ENCODE measurements at regions of chr3 and their contacts with region 1.

Region 1: DNA sequence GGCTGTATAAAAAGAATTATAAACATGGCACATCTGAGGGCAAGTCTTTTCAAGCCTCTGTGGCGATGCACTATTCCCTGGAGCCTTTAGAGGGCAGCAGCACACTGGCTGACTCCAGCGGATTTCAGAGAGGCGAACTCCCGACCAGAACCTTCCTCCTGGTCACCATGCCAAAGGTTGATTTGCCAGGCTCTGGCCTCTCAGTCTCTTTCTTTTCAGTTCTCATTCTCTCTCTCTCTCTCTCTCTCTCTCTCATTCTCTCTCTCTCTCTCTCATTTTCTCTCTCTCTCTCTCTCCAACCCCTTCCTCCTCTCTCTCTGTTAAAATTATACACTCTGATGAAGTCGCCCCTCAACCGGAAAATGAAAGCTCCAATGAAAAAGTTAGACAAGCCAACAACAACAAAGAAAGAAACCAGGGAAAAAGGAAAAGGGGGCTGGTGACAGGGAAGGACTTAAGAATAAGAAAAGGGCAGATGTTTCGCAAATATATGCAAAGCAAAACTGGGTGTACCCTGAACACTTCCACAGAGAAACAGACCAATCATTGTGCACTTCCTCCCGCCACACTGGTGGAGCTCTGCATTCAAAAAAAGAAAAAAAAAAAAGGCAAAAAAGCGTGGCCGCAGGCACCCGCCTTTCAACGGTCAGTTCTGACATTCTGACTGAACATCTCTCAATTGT is 90.2 kb downstream of the TIGIT start:
- DNase-seq: peak; percentile 39 to 50 (median 47)
- H3K4me3 ChIP-seq: peak overlapping the region in 1 of 2 donors; percentile 33
- H3K4me3 Mint-ChIP-seq: peak overlapping the region in 7 of 8 donors; percentile 74 to 89 (median 85)
- H3K27ac ChIP-seq: no peak overlapping the region
- H3K27ac Mint-ChIP-seq: peak overlapping the region in 5 of 7 donors; percentile 38 to 76 (median 61)
- H3K4me1 ChIP-seq: peaks cover 16% of the 10 kb centered on the region
- H3K4me1 Mint-ChIP-seq: peaks cover 8 to 15% (median 12%) of the 10 kb centered on the region in 4 donors
- H3K27me3 ChIP-seq: no peaks in the 10 kb centered on the region
- H3K27me3 Mint-ChIP-seq: no peaks in the 10 kb centered on the region

Region 2: GRCh38 chr3:112751564-112752512 is 1632.2 kb before region 1 on chr3:
- CTCF ChIA-PET with region 1: no interaction called
- POLR2A ChIA-PET with region 1: no interaction called
- intact Hi-C with region 1: no loop called
- DNase-seq: no peak
- H3K4me3 ChIP-seq: no peak overlapping the region
- H3K4me3 Mint-ChIP-seq: no peak overlapping the region
- H3K27ac ChIP-seq: no peak overlapping the region
- H3K27ac Mint-ChIP-seq: no peak overlapping the region
- H3K4me1 ChIP-seq: peaks cover 21% of the 10 kb centered on the region
- H3K4me1 Mint-ChIP-seq: peaks cover 6 to 17% (median 13%) of the 10 kb centered on the region in 4 donors
- H3K27me3 ChIP-seq: no peaks in the 10 kb centered on the region
- H3K27me3 Mint-ChIP-seq: no peaks in the 10 kb centered on the region

Region 3: GRCh38 chr3:114405202-114405990 is 21.4 kb after region 1 on chr3:
- CTCF ChIA-PET with region 1: interaction called, 27 read pairs
- POLR2A ChIA-PET with region 1: no interaction called
- intact Hi-C with region 1: no loop called
- DNase-seq: no peak
- H3K4me3 ChIP-seq: no peak overlapping the region
- H3K4me3 Mint-ChIP-seq: no peak overlapping the region
- H3K27ac ChIP-seq: no peak overlapping the region
- H3K27ac Mint-ChIP-seq: no peak overlapping the region
- H3K4me1 ChIP-seq: no peaks in the 10 kb centered on the region
- H3K4me1 Mint-ChIP-seq: peaks cover 0 to 1% (median 0%) of the 10 kb centered on the region in 4 donors
- H3K27me3 ChIP-seq: no peaks in the 10 kb centered on the region
- H3K27me3 Mint-ChIP-seq: no peaks in the 10 kb centered on the region

Region 4: GRCh38 chr3:114411811-114412803 is 28.1 kb after region 1 on chr3:
- CTCF ChIA-PET with region 1: interaction called, 27 read pairs
- POLR2A ChIA-PET with region 1: no interaction called
- intact Hi-C with region 1: no loop called
- DNase-seq: no peak
- H3K4me3 ChIP-seq: no peak overlapping the region
- H3K4me3 Mint-ChIP-seq: no peak overlapping the region
- H3K27ac ChIP-seq: no peak overlapping the region
- H3K27ac Mint-ChIP-seq: peak overlapping the region in 1 of 7 donors; percentile 28
- H3K4me1 ChIP-seq: no peaks in the 10 kb centered on the region
- H3K4me1 Mint-ChIP-seq: peaks cover 4 to 12% (median 9%) of the 10 kb centered on the region in 4 donors
- H3K27me3 ChIP-seq: no peaks in the 10 kb centered on the region
- H3K27me3 Mint-ChIP-seq: no peaks in the 10 kb centered on the region

Region 5: GRCh38 chr3:114649331-114649730 is 265.3 kb after region 1 on chr3:
- CTCF ChIA-PET with region 1: no interaction called
- POLR2A ChIA-PET with region 1: no interaction called
- intact Hi-C with region 1: no loop called
- DNase-seq: no peak
- H3K4me3 ChIP-seq: no peak overlapping the region
- H3K4me3 Mint-ChIP-seq: no peak overlapping the region
- H3K27ac ChIP-seq: no peak overlapping the region
- H3K27ac Mint-ChIP-seq: no peak overlapping the region
- H3K4me1 ChIP-seq: no peaks in the 10 kb centered on the region
- H3K4me1 Mint-ChIP-seq: peaks cover 0 to 8% (median 4%) of the 10 kb centered on the region in 4 donors
- H3K27me3 ChIP-seq: no peaks in the 10 kb centered on the region
- H3K27me3 Mint-ChIP-seq: no peaks in the 10 kb centered on the region

Measured in CD4-positive, alpha-beta memory T cell (primary cell).